BJ (cell line): ENCODE measurements at regions of chr5 and their contacts with region 1.

Region 1: DNA sequence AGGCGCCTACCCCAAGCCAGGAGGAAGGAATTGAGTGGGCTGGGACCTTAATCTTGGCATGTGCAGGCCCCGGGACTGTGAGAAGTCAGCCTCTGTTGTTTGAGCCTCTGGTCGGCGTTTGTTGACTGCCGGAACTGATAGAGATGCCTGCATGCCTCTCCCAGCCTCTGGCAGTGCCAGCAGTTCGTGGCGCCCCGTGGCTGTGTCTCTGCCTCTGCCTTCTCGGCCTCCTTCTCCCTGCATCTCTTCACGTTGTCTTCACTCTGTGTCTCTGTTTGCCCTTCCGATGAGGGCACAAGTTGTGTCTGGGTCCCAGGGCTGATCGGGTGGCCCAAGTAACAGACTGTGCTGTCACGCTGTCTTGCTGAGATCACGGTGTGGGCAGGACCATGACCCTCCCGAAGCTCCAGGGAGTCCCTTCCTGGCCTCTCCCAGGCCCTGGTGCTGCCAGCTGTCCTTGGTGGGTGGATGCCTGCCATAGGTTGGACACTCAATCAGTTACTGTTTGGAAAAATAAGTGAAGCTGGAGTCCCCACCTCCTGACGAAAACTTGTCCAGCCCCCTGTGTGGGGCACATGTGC is 133.5 kb upstream of the LPCAT1 start:
- DNase-seq: no peak
- H3K4me3 ChIP-seq: no peak overlapping the region
- H3K27me3 ChIP-seq: peaks cover 18% of the 10 kb centered on the region
- CTCF ChIP-seq: no peak

Region 2: DNA sequence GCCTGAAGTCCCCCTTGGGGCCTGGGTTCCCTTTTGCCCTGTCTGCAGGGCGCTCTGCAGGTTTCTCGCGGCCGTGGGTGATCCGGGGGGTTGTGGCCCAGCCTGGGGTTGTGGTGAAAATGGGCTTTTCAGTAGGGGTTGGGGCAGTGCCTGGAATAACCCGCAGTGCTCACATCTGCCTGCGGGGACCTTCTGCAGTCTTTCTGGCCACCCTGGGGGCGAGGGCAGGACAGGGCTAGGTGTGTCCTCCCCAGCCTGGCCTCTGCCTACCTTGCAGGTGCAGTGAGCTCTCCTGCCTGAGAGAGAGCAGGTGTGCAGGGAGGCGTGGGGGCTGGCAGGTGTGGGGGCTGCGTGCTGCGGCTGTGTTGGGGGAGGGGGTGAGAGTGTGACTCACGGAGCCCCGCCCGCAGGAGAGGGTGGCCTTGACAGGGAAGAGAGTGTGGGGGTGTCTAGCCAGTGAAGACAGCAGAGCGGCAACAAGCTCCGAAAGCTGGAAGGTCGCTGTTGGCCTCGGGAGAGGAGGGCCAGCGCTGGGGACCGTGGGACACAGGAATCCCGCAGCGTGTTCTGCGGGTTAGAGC is 11.0 kb after region 1 on chr5:
- CTCF ChIA-PET with region 1: interaction called, 14 read pairs
- POLR2A ChIA-PET with region 1: no interaction called
- DNase-seq: no peak
- H3K4me3 ChIP-seq: no peak overlapping the region
- H3K27me3 ChIP-seq: peaks cover 24% of the 10 kb centered on the region
- CTCF ChIP-seq: no peak